ENCODE measurements at regions of chr6 and their contacts with region 1.

Region 1: DNA sequence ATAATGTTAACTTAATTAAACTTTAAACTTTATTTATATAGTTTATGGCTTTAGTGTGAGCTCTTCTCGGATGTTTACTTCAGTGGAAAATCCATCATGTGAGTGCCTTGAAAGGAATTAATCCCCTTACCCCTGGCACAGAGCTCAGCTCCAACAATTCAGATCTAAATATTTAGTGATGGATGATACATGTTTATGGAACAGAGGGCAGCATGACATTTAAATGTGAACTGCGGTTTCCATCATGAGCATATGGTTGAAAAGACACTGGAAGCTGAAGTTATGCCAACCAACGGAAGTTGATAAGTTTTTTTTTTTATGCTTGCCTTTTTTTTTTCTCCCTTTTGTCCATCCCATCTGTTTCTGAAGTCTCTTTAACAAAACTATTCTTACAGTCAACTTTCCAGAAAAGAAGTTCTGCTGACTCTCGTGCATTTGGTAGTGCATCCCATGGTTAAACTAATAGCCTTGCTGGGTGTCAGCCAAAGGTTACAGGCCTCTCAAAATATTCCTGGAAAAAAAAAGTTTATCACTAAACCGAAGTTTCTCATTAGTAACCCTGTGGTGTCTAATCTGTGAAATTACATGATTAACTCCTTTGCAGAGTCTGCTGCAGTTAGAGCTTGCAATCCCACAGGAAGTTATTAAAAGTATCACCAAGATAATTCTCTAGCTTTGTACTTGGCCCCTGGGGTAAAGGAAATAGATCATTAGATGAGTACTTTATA is 243.9 kb upstream of the TCF21 start:
- DNase-seq: no peak
- H3K4me3 ChIP-seq: no peak overlapping the region
- H3K27ac ChIP-seq: peak overlapping the region; percentile 16 to 56 (median 41)
- H3K4me1 ChIP-seq: peaks cover 0 to 4% (median 0%) of the 10 kb centered on the region in 4 donors
- H3K27me3 ChIP-seq: no peaks in the 10 kb centered on the region
- CTCF ChIP-seq: no peak
- EP300 ChIP-seq: no peak
- POLR2A ChIP-seq: no peak

Region 2: GRCh38 chr6:133595111-133595761 is 49.8 kb before region 1 on chr6:
- in situ Hi-C with region 1: no loop called
- intact Hi-C with region 1: loop called (anchors 1 kb)
- DNase-seq: no peak
- H3K4me3 ChIP-seq: no peak overlapping the region
- H3K27ac ChIP-seq: peak overlapping the region; percentile 13 to 46 (median 37)
- H3K4me1 ChIP-seq: no peaks in the 10 kb centered on the region
- H3K27me3 ChIP-seq: no peaks in the 10 kb centered on the region
- CTCF ChIP-seq: no peak
- EP300 ChIP-seq: no peak
- POLR2A ChIP-seq: no peak